ENCODE measurements at regions of chr1 and their contacts with region 1.

Region 1: DNA sequence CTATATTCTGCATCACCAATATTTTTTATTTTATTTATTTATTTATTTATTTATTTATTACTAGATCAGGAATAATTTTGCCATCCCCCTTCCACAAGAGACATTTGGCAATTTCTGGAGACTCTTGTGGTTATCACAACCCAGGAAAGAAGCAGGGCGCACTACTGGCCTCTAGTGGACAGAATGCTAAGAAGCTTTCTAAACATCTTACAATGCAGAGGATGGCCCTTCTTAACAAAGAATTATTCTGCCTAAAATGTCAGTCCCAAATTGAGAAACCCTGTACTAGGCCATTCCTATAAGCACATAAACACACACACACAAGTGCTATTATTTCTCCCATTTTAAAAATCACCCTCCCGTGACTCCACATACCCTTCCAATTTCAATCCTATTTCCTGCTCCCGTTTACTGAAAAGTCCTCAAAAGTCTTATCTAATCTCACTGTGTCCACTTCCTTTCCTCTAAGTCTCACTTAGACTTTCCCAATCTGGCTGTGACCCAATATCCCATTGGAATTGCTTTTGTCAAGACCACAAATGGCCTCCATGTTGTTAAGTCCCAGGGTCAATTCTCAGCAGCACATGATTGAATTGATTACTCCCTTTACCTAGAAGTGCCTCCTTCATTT is 43.7 kb upstream of the RNF11 start:
- DNase-seq: peak; percentile 65
- ATAC-seq: peak; percentile 45
- H3K4me3 Mint-ChIP-seq: no peak overlapping the region
- H3K27ac Mint-ChIP-seq: no peak overlapping the region
- H3K4me1 Mint-ChIP-seq: no peaks in the 10 kb centered on the region
- H3K27me3 Mint-ChIP-seq: peaks cover 6% of the 10 kb centered on the region

Region 2: GRCh38 chr1:50873458-50874187 is 318.7 kb before region 1 on chr1:
- CTCF ChIA-PET with region 1: interaction called, 45 read pairs
- DNase-seq: peak; percentile 86
- ATAC-seq: peak; percentile 96
- H3K4me3 Mint-ChIP-seq: peak overlapping the region; percentile 55
- H3K27ac Mint-ChIP-seq: peak overlapping the region; percentile 49
- H3K4me1 Mint-ChIP-seq: peaks cover 9% of the 10 kb centered on the region
- H3K27me3 Mint-ChIP-seq: no peaks in the 10 kb centered on the region

Region 3: GRCh38 chr1:51131185-51131584 is 61.1 kb before region 1 on chr1:
- CTCF ChIA-PET with region 1: no interaction called
- DNase-seq: no peak
- ATAC-seq: no peak
- H3K4me3 Mint-ChIP-seq: no peak overlapping the region
- H3K27ac Mint-ChIP-seq: no peak overlapping the region
- H3K4me1 Mint-ChIP-seq: no peaks in the 10 kb centered on the region
- H3K27me3 Mint-ChIP-seq: peaks cover 55% of the 10 kb centered on the region

Region 4: GRCh38 chr1:51175278-51175677 is 17.1 kb before region 1 on chr1:
- CTCF ChIA-PET with region 1: interaction called, 27 read pairs
- DNase-seq: no peak
- ATAC-seq: no peak
- H3K4me3 Mint-ChIP-seq: no peak overlapping the region
- H3K27ac Mint-ChIP-seq: no peak overlapping the region
- H3K4me1 Mint-ChIP-seq: no peaks in the 10 kb centered on the region
- H3K27me3 Mint-ChIP-seq: peaks cover 35% of the 10 kb centered on the region

Region 5: DNA sequence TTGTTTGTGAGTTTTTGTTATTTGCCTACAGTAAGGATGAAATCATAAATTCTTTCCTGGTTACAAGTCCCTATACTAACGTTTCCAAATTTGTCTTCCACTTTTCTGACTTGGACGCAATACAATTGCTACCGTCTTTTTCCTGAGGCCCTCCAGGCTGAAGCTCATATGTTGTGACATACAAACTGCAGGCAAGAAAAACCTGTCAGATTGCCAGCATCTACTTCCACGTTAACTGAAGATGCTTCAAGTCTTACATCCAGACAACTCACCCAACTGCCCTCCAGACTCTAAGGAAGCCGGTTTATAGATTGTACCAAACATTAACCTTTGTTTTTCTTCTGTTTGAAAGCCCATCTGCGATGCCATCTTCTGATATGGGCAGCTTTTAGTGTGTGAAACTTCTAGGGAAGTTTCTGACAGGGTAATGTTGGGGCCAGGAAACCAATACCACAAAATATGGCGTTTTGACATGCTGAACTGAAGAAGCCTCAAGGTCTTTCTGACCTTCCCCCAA is 22.3 kb after region 1 on chr1:
- CTCF ChIA-PET with region 1: interaction called, 10 read pairs
- DNase-seq: peak; percentile 50
- ATAC-seq: peak; percentile 74
- H3K4me3 Mint-ChIP-seq: no peak overlapping the region
- H3K27ac Mint-ChIP-seq: peak overlapping the region; percentile 66
- H3K4me1 Mint-ChIP-seq: peaks cover 19% of the 10 kb centered on the region
- H3K27me3 Mint-ChIP-seq: no peaks in the 10 kb centered on the region

Region 6: DNA sequence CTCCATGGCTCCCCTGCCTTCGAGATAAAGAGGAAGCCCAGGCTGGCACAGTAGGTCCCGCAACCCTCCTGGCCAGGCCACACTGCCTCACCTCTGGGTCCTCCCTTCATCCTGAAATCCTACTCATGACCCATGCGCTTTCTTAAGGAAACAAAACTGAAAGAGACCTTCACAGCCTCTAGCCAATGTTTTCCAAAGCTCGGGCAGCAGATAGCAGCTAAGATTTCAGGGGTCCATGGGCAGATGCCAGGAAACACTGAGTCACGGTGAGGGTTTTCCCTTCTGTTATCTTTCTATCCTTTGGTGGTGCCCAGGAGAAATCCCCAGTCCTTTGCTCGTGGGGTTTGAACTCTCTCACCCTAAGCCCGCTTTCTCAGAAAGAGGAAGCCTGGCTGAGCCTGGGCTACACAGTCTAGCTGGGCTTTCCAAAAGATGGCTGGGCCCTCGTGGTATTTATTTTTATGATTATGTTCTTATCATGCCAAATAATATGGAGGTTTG is 111.5 kb after region 1 on chr1:
- CTCF ChIA-PET with region 1: no interaction called
- DNase-seq: no peak
- ATAC-seq: no peak
- H3K4me3 Mint-ChIP-seq: no peak overlapping the region
- H3K27ac Mint-ChIP-seq: peak overlapping the region; percentile 54
- H3K4me1 Mint-ChIP-seq: peaks cover 19% of the 10 kb centered on the region
- H3K27me3 Mint-ChIP-seq: no peaks in the 10 kb centered on the region

Measured in activated CD8-positive, alpha-beta memory T cell treated with anti-CD3 and anti-CD28 coated beads, Interleukin-2, amount 10 ng/mL, durations not matched to agents 7 days and 5 days (primary cell).